CD8-positive, alpha-beta T cell (primary cell): ENCODE measurements at regions of chr19 and their contacts with region 1.

Region 1: DNA sequence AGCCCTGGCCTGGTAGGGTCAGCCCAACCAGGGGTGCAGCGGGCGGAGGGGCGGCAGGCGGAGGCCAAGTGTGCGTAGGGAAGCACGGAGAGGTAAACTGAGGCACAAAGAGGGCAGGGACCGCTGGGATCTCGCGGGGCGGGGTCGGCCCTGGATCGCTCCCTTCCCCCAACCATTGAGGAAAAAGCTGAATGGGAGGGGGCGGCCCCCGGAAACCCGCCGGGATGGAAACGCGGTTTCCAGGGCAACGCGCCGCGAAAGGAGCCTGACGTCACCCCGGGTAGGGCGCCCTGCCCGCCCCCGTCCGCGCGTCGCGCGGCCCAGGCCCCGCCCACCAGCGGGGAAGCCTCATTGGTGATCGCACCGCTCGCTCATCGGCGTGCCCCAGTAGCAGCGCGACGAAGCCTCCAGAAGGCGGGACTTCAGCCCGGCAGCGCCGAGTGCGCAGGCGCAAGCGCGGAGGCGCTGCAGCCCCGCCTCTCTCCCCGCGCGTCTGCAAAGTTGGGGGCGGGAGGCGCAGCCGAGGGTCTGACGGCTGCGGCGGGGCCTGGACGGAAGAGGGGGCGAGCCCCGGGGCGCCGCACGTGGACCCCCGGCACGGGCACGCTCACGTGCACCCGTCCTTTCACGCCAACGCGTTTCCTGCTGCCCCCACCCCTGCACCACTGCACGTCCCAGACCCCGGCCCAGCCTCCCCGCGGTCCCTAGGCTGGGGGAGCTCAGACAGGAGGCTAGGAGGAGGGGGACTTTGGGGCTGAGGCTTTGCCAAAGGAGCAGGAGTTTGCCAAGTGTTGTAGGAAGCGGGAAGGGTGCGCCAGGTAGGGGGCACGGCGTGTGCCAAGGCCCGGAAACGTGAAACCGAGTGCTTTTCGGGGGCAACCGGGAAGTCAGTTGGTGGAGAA is 8.2 kb upstream of the CIRBP start:
- DNase-seq: peak; percentile 94 to 99 (median 97)
- ATAC-seq: peak; percentile 77
- H3K4me3 ChIP-seq: peak overlapping the region; percentile 83 to 98
- H3K4me3 Mint-ChIP-seq: peak overlapping the region; percentile 90
- H3K27ac ChIP-seq: peak overlapping the region; percentile 99 to 100
- H3K27ac Mint-ChIP-seq: peak overlapping the region; percentile 96
- H3K4me1 ChIP-seq: peaks cover 70% of the 10 kb centered on the region
- H3K4me1 Mint-ChIP-seq: peaks cover 57% of the 10 kb centered on the region
- H3K27me3 ChIP-seq: no peaks in the 10 kb centered on the region
- H3K27me3 Mint-ChIP-seq: no peaks in the 10 kb centered on the region
- CTCF ChIP-seq: no peak

Region 2: DNA sequence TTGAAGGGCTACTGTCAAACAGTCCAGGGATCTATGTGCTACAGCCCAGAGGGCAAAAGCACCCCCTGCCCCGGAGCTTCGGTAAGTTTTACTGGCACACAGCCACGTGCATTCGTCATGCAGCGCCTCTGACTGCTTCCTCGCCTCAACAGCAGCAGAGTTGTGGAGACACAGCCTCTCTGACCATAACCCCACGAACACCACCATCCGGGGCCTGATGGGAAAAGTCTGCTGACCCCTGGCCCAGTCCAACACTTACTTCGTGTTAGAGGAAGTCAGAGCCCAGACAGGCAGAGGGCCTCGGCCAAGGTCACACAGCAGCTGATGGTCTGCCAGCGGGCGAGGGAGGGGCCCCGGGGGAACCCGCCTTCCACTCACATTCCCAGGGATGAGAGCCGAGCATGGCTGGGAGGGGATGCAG is 28.2 kb before region 1 on chr19:
- CTCF ChIA-PET with region 1: no interaction called
- POLR2A ChIA-PET with region 1: no interaction called
- intact Hi-C with region 1: no loop called
- DNase-seq: no peak
- ATAC-seq: no peak
- H3K4me3 ChIP-seq: no peak overlapping the region
- H3K4me3 Mint-ChIP-seq: no peak overlapping the region
- H3K27ac ChIP-seq: no peak overlapping the region
- H3K27ac Mint-ChIP-seq: no peak overlapping the region
- H3K4me1 ChIP-seq: peaks cover 5% of the 10 kb centered on the region
- H3K4me1 Mint-ChIP-seq: no peaks in the 10 kb centered on the region
- H3K27me3 ChIP-seq: peaks cover 0 to 10% of the 10 kb centered on the region in 2 experiments
- H3K27me3 Mint-ChIP-seq: no peaks in the 10 kb centered on the region
- CTCF ChIP-seq: no peak

Region 3: GRCh38 chr19:1249298-1249989 is 11.4 kb before region 1 on chr19:
- CTCF ChIA-PET with region 1: interaction called, 498 read pairs
- POLR2A ChIA-PET with region 1: interaction called, 271 read pairs
- intact Hi-C with region 1: loop called (anchors 1 kb)
- DNase-seq: peak; percentile 89 to 98 (median 95)
- ATAC-seq: peak; percentile 55
- H3K4me3 ChIP-seq: peak overlapping the region; percentile 86 to 88
- H3K4me3 Mint-ChIP-seq: peak overlapping the region; percentile 87
- H3K27ac ChIP-seq: peak overlapping the region; percentile 83 to 84
- H3K27ac Mint-ChIP-seq: peak overlapping the region; percentile 88
- H3K4me1 ChIP-seq: peaks cover 31% of the 10 kb centered on the region
- H3K4me1 Mint-ChIP-seq: peaks cover 10% of the 10 kb centered on the region
- H3K27me3 ChIP-seq: no peaks in the 10 kb centered on the region
- H3K27me3 Mint-ChIP-seq: no peaks in the 10 kb centered on the region
- CTCF ChIP-seq: no peak

Region 4: DNA sequence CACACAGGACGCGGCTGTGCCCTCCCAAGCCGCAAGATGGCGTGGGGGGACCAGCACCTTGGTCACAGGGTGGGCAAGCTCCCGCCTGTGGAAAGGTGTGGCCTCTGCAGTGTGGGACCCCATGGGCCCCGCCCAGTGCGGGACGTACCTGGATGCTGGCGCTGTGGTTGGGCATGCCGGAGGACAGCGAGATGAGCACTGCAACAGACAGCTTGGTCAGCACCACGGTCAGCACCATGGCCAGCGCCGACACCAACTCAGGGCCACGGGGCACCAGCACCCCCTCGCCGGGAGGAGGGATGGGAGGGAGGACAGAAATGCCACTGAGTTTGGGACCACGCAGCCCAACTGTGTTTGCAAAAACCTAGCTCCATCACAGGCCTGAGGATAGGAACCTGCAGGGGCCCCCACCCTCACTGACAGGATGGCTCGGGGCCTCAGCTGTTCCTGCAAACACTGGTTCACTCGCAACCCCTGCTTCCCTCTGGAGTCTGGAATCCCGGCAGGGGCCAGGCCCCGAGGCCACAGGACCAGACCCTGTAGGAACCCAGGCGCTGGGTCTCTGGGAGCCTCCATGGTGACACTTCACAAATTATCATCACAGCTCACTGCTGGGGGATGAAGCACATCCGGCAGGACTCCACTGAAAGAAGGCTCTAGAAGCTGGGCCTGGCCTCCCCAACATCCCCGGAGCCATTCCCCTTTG is 862.9 kb after region 1 on chr19:
- CTCF ChIA-PET with region 1: no interaction called
- POLR2A ChIA-PET with region 1: no interaction called
- intact Hi-C with region 1: no loop called
- DNase-seq: peak in 1 of 9 experiments; percentile 23
- ATAC-seq: no peak
- H3K4me3 ChIP-seq: no peak overlapping the region
- H3K4me3 Mint-ChIP-seq: no peak overlapping the region
- H3K27ac ChIP-seq: no peak overlapping the region
- H3K27ac Mint-ChIP-seq: no peak overlapping the region
- H3K4me1 ChIP-seq: no peaks in the 10 kb centered on the region
- H3K4me1 Mint-ChIP-seq: no peaks in the 10 kb centered on the region
- H3K27me3 ChIP-seq: no peaks in the 10 kb centered on the region
- H3K27me3 Mint-ChIP-seq: no peaks in the 10 kb centered on the region
- CTCF ChIP-seq: no peak